Upper lobe of right lung (tissue), 1 donor: ENCODE measurements at regions of chr4 and their contacts with region 1.

Region 1: GRCh38 chr4:27000820-27001219 is 140.2 kb downstream of the STIM2 start:
- DNase-seq: no peak
- ATAC-seq: peak; percentile 64
- H3K4me3 ChIP-seq: no peak overlapping the region
- H3K27ac ChIP-seq: no peak overlapping the region
- H3K4me1 ChIP-seq: no peaks in the 10 kb centered on the region
- H3K27me3 ChIP-seq: no peaks in the 10 kb centered on the region
- CTCF ChIP-seq: peak; percentile 21

Region 2: DNA sequence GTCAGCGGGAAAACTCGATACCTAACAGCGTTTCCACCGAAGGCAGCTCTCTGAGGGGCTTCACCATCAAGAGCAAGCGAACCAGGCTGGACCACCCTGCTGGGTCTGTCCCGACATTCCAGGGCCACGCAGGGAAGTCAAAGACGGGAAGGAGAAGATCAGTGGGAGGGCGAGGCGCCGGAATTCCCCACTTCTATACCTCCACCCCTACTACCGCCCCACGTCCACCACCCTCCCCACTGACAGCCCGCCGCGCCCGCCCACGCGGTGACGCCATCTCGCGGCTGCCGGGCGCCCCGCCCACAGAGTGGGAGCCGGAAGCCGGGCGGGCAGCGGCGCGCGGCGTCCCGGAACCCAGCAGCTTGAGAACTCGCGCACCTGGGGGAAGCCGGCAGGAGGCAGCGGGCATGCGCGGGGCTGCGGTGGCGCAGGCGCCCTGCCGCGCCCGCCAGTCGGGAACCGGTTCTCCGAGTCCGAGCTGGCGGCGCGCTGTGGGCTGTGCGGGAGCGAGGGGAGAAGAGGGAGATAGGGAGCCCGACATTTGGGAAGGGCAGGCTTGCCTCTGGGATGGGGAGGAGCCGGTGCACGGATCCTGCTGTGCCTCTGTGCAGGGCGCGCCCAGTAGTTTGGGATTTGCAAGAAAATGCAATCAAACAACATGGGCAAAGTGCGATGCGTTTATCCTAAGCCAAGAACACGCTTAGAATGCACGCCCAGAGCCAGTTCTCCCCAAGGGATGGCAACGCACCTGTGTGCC is 143.4 kb before region 1 on chr4:
- intact Hi-C with region 1: loop called (anchors 10 kb)
- DNase-seq: peak; percentile 96
- ATAC-seq: peak; percentile 85
- H3K4me3 ChIP-seq: peak overlapping the region; percentile 83
- H3K27ac ChIP-seq: peak overlapping the region; percentile 92
- H3K4me1 ChIP-seq: peaks cover 21% of the 10 kb centered on the region
- H3K27me3 ChIP-seq: no peaks in the 10 kb centered on the region
- CTCF ChIP-seq: no peak

Region 3: GRCh38 chr4:27828843-27829242 is 828.0 kb after region 1 on chr4:
- intact Hi-C with region 1: no loop called
- DNase-seq: no peak
- ATAC-seq: no peak
- H3K4me3 ChIP-seq: no peak overlapping the region
- H3K27ac ChIP-seq: no peak overlapping the region
- H3K4me1 ChIP-seq: no peaks in the 10 kb centered on the region
- H3K27me3 ChIP-seq: no peaks in the 10 kb centered on the region
- CTCF ChIP-seq: no peak